GM12878 (cell line): ENCODE measurements at regions of chr1 and their contacts with region 1.

Region 1: DNA sequence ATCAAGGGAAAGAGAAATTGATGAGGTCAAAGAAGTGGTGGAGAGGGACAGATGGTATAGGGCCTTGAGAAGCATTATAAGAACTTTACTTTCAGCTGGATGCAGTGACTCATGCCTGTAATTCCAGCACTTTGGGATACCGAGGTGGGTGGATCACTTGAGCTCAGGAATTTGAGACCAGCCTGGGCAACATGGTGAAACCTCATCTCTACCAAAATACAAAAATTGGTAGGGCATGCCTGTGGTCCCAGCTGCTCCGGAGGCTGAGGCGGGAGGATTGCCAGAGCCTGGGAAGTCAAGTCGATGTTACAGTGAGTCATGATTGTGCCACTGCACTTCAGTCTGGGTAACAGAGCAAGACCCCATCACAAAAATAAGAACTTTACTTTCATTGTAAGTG is 5.7 kb downstream of the TMEM50A start:
- DNase-seq: no peak
- ATAC-seq: no peak
- H3K4me3 ChIP-seq: no peak overlapping the region
- H3K27ac ChIP-seq: no peak overlapping the region
- H3K4me1 ChIP-seq: no peaks in the 10 kb centered on the region
- H3K27me3 ChIP-seq: no peaks in the 10 kb centered on the region
- CTCF ChIP-seq: no peak
- EP300 ChIP-seq: no peak
- POLR2A ChIP-seq: no peak
- RAD21 ChIP-seq: no peak

Region 2: DNA sequence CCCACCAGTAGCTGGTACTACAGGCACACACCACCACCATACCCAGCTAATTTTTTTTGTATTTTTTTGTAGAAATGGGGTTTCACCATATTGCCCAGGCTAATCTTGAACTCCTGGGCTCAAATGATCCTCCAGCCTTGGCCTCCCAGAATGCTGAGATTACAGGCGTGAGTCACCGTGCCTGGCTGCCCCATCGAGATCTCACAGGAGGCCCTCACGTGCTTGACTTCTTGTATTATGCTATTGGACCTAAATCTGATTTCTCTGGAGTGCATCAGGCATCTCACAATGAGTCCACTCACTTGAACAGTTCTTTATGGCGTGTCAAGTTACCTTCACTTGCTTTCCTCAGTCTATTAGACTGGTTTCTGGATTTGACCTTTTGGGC is 87.3 kb before region 1 on chr1:
- CTCF ChIA-PET with region 1: no interaction called
- POLR2A ChIA-PET with region 1: no interaction called
- RAD21 ChIA-PET with region 1: no interaction called
- SMC1A ChIA-PET with region 1: no interaction called
- in situ Hi-C with region 1: loop called (anchors 5 kb)
- intact Hi-C with region 1: no loop called
- DNase-seq: no peak
- ATAC-seq: no peak
- H3K4me3 ChIP-seq: no peak overlapping the region
- H3K27ac ChIP-seq: no peak overlapping the region
- H3K4me1 ChIP-seq: no peaks in the 10 kb centered on the region
- H3K27me3 ChIP-seq: no peaks in the 10 kb centered on the region
- CTCF ChIP-seq: no peak
- EP300 ChIP-seq: no peak
- POLR2A ChIP-seq: no peak
- RAD21 ChIP-seq: no peak

Region 3: GRCh38 chr1:25556791-25557476 is 213.1 kb after region 1 on chr1:
- CTCF ChIA-PET with region 1: no interaction called
- POLR2A ChIA-PET with region 1: no interaction called
- RAD21 ChIA-PET with region 1: no interaction called
- SMC1A ChIA-PET with region 1: no interaction called
- in situ Hi-C with region 1: no loop called
- intact Hi-C with region 1: no loop called
- DNase-seq: no peak
- ATAC-seq: peak; percentile 65
- H3K4me3 ChIP-seq: no peak overlapping the region
- H3K27ac ChIP-seq: no peak overlapping the region
- H3K4me1 ChIP-seq: peaks cover 22% of the 10 kb centered on the region
- H3K27me3 ChIP-seq: no peaks in the 10 kb centered on the region
- CTCF ChIP-seq: no peak
- EP300 ChIP-seq: no peak
- POLR2A ChIP-seq: no peak
- RAD21 ChIP-seq: no peak